ENCODE measurements at regions of chr5 and their contacts with region 1.

Region 1: GRCh38 chr5:126354012-126354857 is 69.0 kb upstream of the GRAMD2B start:
- DNase-seq: no peak
- ATAC-seq: peak; percentile 70

Region 2: GRCh38 chr5:126492936-126493335 is 138.7 kb after region 1 on chr5:
- intact Hi-C with region 1: loop called (anchors 2 kb)
- DNase-seq: no peak
- ATAC-seq: no peak

Region 3: GRCh38 chr5:126544087-126544740 is 190.0 kb after region 1 on chr5:
- intact Hi-C with region 1: loop called (anchors 1 kb)
- DNase-seq: no peak
- ATAC-seq: no peak

Region 4: DNA sequence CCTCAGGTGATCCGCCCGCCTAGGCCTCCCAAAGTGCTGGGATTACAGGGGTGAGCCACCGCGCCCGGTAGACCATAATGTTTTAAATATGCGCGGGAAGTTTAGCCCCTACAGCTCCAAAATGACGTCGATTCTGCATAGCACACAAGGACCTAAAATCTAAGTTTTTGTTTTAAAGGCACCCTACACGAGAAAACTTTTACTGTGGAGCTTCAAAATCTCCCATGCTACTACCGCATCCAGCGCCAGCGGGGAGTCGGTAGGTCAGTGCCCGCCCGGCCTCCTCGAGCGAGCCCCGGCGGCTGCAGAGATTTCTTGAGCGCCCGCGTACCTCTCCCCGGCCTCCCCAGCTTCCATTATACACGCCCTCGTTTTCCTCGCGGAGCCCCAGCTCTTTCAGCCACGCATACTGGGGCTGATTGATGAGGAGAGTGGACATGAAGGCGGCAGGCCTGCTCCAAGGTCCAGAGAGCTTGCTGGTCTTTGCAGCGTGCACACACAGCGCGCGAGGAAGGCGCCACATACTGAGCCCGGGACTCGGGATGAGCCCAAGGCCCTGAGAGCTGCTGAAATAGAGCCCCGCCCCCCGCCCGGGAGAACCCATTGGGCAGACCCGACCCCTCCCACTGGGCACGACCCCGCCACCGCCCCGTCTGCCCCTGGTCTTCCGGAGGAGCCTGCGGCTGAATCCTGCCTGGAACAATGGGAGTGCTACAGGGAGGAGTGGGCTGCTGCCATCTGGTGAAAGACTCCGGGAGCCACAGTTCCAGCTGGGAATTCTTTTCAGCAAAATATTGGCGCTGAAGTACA is 240.6 kb after region 1 on chr5 and contains the start of gene ALDH7A1:
- intact Hi-C with region 1: loop called (anchors 5 kb)
- DNase-seq: peak; percentile 90
- ATAC-seq: peak; percentile 96
- total RNA-seq, gene ALDH7A1: 35.5 TPM